K562 (cell line): ENCODE measurements at regions of chr3 and their contacts with region 1.

Region 1: DNA sequence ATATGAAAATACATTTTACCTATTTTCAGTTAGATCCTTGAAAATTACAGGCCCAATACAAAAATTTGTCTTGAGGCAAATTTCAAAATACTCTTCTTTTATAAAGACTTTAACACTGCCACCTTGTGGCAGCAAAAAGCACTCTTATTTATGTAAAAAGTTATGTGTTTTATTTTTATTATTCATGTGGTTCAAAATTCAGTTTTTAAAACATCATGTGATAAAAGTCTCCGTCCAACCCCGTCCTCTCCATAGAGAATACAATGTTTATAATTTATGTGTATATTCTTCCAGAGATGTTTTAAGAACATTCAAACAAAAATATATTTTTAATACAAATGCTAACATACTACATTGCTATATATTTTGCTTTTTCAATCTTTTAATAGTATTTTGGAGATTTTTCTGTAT is 36.9 kb upstream of the TRIM59 start:
- DNase-seq: peak in 1 of 4 experiments; percentile 67
- ATAC-seq: peak; percentile 26; the same call in 2 of the 3 replicates
- H3K4me3 ChIP-seq: no peak overlapping the region
- H3K27ac ChIP-seq: no peak overlapping the region
- H3K4me1 ChIP-seq: no peaks in the 10 kb centered on the region
- H3K27me3 ChIP-seq: no peaks in the 10 kb centered on the region
- CTCF ChIP-seq: peak in 2 of 3 experiments; percentile 36 to 70; a peak in 3 of 6 replicates
- EP300 ChIP-seq: no peak
- POLR2A ChIP-seq: no peak
- RAD21 ChIP-seq: peak; percentile 64 to 80

Region 2: DNA sequence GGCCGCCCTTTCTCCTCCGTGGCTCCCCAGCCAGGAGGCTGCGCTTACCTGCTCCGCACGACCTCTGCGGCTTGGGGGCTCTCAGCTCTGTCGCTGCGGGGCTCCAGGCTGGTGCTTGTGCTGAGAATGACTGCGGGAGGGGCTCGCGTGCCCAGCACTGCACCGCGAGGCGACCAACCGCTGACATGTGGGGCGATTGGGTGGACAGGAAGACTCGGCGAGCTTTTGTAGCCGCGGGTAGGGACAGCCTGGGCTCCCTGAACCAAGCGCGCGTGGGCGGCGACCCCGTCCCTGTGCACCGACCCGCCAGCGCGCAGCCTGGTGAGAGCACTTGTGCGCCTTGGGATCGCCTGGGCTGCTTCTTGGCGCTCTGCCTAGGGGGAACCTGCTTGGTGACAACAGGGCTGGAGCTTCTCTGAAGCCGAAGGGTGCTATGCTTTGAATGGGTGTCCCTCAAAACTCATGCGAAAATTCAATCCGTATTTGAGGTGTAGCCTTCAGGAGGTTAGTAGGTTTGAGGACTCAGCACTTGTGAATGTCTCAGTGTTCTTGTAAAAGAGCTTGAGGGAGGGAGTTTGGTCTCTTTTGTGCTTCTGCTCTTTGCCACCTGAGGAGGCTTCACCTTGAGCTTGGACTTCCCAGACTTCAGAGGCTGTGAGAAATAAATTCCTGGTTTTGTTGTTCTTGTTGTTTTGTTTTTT is 447.5 kb before region 1 on chr3:
- CTCF ChIA-PET with region 1: no interaction called
- POLR2A ChIA-PET with region 1: no interaction called
- in situ Hi-C with region 1: loop called (anchors 10 kb)
- intact Hi-C with region 1: loop called (anchors 10 kb)
- DNase-seq: no peak
- ATAC-seq: no peak; the same call in 2 of the 3 replicates
- H3K4me3 ChIP-seq: no peak overlapping the region
- H3K27ac ChIP-seq: no peak overlapping the region
- H3K4me1 ChIP-seq: no peaks in the 10 kb centered on the region; a peak in 1 of 5 replicates
- H3K27me3 ChIP-seq: peaks cover 4 to 14% of the 10 kb centered on the region in 2 experiments; a peak in 4 of 5 replicates
- CTCF ChIP-seq: no peak
- EP300 ChIP-seq: no peak
- POLR2A ChIP-seq: no peak
- RAD21 ChIP-seq: no peak

Region 3: DNA sequence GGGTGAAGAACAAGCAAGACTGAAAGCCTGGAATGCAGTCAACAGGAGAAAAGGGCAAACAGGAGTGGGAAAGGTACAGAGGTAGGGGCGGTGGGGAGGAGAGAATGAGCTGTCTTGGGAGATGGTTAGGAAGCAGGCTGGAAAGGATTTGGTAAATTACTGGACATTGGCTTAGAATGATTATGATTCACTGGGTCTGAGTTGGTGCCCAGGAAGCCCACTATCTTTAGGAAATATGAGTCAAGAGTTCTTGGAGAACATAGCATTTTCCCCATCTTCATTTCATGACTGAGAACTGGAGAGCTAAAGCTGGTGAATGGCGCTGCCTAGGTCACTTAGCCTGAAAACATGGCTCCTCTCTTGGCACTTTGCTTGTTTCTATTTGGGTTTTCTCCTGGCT is 335.9 kb before region 1 on chr3:
- CTCF ChIA-PET with region 1: no interaction called
- POLR2A ChIA-PET with region 1: interaction called, 3 read pairs
- in situ Hi-C with region 1: loop called (anchors 10 kb)
- intact Hi-C with region 1: no loop called
- DNase-seq: no peak
- ATAC-seq: no peak
- H3K4me3 ChIP-seq: no peak overlapping the region
- H3K27ac ChIP-seq: no peak overlapping the region
- H3K4me1 ChIP-seq: no peaks in the 10 kb centered on the region
- H3K27me3 ChIP-seq: no peaks in the 10 kb centered on the region
- CTCF ChIP-seq: no peak
- EP300 ChIP-seq: no peak
- POLR2A ChIP-seq: no peak
- RAD21 ChIP-seq: no peak

Region 4: DNA sequence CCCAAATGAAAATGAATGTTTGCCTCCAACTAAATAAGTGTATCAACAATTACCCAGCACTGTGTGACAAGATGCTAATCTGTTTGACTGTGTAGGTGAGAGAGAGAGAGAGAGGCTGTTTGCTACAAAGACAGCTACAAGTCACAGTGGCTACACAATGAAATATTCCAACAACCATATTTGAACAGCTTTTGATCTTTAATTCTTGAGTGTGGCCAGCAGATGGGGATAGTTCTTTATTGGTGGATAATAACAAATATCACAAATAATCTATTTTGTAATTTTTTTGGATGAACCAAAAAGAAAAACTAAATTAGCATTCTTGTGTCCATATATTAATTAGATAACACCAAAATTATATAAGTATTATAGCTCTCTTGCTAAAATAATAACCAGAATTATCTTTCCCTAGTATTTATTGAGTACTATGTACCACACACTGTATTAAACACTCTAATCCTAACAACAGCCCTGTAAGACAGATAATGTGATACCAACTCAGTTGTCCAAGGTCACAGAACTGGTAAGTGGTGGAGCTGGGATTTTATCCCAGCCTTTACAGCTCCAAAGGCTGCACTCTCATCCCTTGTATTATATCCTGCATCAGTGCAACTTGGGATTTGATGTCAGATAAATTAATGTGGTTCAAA is 323.1 kb before region 1 on chr3:
- CTCF ChIA-PET with region 1: interaction called, 4 read pairs
- POLR2A ChIA-PET with region 1: no interaction called
- in situ Hi-C with region 1: loop called (anchors 10 kb)
- intact Hi-C with region 1: loop called (anchors 1 kb)
- DNase-seq: peak in 2 of 4 experiments; percentile 12 to 14
- ATAC-seq: peak; percentile 66
- H3K4me3 ChIP-seq: no peak overlapping the region
- H3K27ac ChIP-seq: no peak overlapping the region
- H3K4me1 ChIP-seq: no peaks in the 10 kb centered on the region
- H3K27me3 ChIP-seq: peaks cover 0 to 2% of the 10 kb centered on the region in 2 experiments; a peak in 1 of 5 replicates
- CTCF ChIP-seq: peak; percentile 35 to 64 (median 38); a peak in 3 of 6 replicates
- EP300 ChIP-seq: no peak
- POLR2A ChIP-seq: no peak
- RAD21 ChIP-seq: peak; percentile 88 to 92

Region 5: DNA sequence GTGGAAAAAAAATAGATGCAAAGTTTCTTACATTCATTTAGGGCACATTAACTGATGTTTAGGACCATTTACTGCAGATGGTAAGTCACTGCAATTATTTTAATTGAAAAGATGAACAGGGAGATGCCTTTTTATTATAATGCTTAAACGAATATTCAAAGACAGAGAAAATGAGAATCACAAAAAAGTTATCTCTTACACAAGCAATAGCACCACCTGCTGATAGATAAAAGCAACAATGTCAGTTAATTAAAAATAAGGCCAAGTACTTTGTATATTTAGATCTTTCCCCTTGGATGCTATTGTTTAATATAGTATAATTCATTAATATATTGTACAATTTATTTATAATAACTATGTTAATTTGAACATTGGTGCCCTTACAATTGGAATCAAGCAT is 143.3 kb before region 1 on chr3:
- CTCF ChIA-PET with region 1: no interaction called
- POLR2A ChIA-PET with region 1: no interaction called
- in situ Hi-C with region 1: no loop called
- intact Hi-C with region 1: loop called (anchors 5 kb)
- DNase-seq: peak in 2 of 4 experiments; percentile 10 to 12
- ATAC-seq: no peak
- H3K4me3 ChIP-seq: no peak overlapping the region
- H3K27ac ChIP-seq: no peak overlapping the region
- H3K4me1 ChIP-seq: no peaks in the 10 kb centered on the region
- H3K27me3 ChIP-seq: no peaks in the 10 kb centered on the region
- CTCF ChIP-seq: peak in 2 of 3 experiments; percentile 35 to 63; a peak in 3 of 6 replicates
- EP300 ChIP-seq: no peak
- POLR2A ChIP-seq: no peak
- RAD21 ChIP-seq: peak; percentile 82 to 85